Heart left ventricle (tissue), 16 donors: ENCODE measurements at regions of chr20 and their contacts with region 1.

Region 1: GRCh38 chr20:3767427-3768341 is at the start of gene ADISSP:
- DNase-seq: peak; percentile 99 to 100 (median 99)
- ATAC-seq: peak; percentile 96 to 98 (median 96)
- H3K4me3 ChIP-seq: peak within 1 kb of the TSS; percentile 49 to 78 (median 69)
- H3K27ac ChIP-seq: peak within 1 kb of the TSS; percentile 54 to 96 (median 86)
- H3K4me1 ChIP-seq: peaks cover 0 to 47% (median 22%) of the 10 kb centered on the region in 12 donors
- H3K27me3 ChIP-seq: no peaks in the 10 kb centered on the region
- CTCF ChIP-seq: peak in 4 of 12 donors; percentile 21 to 44 (median 28)
- POLR2A ChIP-seq: peak in 1 of 2 donors; percentile 69
- total RNA-seq, gene ADISSP: 7.8 to 22.2 (median 13.7) TPM

Region 2: GRCh38 chr20:3716195-3716834 is 51.4 kb before region 1 on chr20:
- intact Hi-C with region 1: loop called in 5 of 10 experiments (anchors 2 to 10 kb)
- DNase-seq: peak in 4 of 5 donors; percentile 44 to 70 (median 52)
- ATAC-seq: peak; percentile 59 to 74 (median 67)
- H3K4me3 ChIP-seq: no peak overlapping the region
- H3K27ac ChIP-seq: no peak overlapping the region
- H3K4me1 ChIP-seq: peaks cover 0 to 24% (median 0%) of the 10 kb centered on the region in 12 donors
- H3K27me3 ChIP-seq: peaks cover 0 to 4% (median 0%) of the 10 kb centered on the region in 9 donors
- CTCF ChIP-seq: peak; percentile 54 to 84 (median 74)
- POLR2A ChIP-seq: no peak